ENCODE measurements at regions of chr14 and their contacts with region 1.

Region 1: GRCh38 chr14:101992708-101993107 is 28.3 kb downstream of the DYNC1H1 start:
- DNase-seq: no peak
- H3K4me3 ChIP-seq: no peak overlapping the region
- H3K27ac ChIP-seq: no peak overlapping the region
- H3K4me1 ChIP-seq: no peaks in the 10 kb centered on the region
- H3K27me3 ChIP-seq: no peaks in the 10 kb centered on the region
- CTCF ChIP-seq: no peak
- POLR2A ChIP-seq: no peak

Region 2: GRCh38 chr14:102035914-102036313 is 43.2 kb after region 1 on chr14:
- intact Hi-C with region 1: loop called (anchors 1 kb)
- DNase-seq: no peak
- H3K4me3 ChIP-seq: no peak overlapping the region
- H3K27ac ChIP-seq: peak overlapping the region in 1 of 2 donors; percentile 62
- H3K4me1 ChIP-seq: no peaks in the 10 kb centered on the region
- H3K27me3 ChIP-seq: no peaks in the 10 kb centered on the region
- CTCF ChIP-seq: no peak
- POLR2A ChIP-seq: no peak

Region 3: GRCh38 chr14:103832046-103832445 is 1839.3 kb after region 1 on chr14:
- intact Hi-C with region 1: loop called (anchors 10 kb)
- DNase-seq: no peak
- H3K4me3 ChIP-seq: no peak overlapping the region
- H3K27ac ChIP-seq: no peak overlapping the region
- H3K4me1 ChIP-seq: no peaks in the 10 kb centered on the region
- H3K27me3 ChIP-seq: no peaks in the 10 kb centered on the region
- CTCF ChIP-seq: no peak
- POLR2A ChIP-seq: no peak